Mammary epithelial cell (primary cell): ENCODE measurements at regions of chr19 and their contacts with region 1.

Region 1: GRCh38 chr19:6038634-6039405 is 60.9 kb upstream of the RANBP3 start:
- DNase-seq: no peak
- H3K4me3 ChIP-seq: no peak overlapping the region
- H3K27ac ChIP-seq: no peak overlapping the region
- H3K4me1 ChIP-seq: no peaks in the 10 kb centered on the region
- H3K27me3 ChIP-seq: no peaks in the 10 kb centered on the region
- CTCF ChIP-seq: no peak

Region 2: DNA sequence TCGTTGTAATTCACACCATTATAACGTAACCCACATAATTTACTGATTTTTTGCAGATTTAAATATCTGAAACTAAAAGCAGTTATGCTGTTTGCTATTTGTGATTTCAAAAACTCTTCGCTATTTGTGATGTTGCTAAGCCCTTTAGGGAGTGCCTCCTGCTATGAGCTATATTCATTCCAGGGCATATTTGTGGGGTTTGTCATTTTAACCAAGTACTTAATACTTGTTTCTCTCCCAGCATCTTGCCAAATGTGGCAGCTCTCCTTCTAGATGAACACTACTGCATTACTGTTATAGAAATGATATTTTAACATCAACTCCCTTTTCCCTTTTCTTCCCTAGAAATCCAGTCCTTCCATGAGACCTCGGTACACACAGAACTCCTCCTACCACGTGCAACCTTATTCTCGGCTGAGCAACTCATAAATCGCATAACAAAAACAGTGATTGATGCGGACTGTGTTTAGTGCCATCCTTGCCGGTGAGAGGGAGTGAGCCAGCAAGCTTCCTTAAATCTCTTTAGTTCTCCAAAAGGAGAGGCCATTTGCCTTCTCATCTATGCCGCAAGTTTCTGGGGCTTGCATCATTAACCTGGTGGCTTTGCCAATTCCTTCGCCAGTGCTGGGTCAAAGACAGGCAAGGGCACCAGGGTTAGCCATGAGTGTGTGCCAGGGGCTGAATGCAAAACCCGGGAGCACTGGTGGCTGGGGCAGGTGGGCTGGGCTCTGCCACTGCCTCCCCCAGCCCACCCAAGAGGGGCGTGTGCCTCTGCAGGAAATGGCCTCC is 38.0 kb after region 1 on chr19:
- CTCF ChIA-PET with region 1: no interaction called
- dilution Hi-C with region 1: loop called (anchors 5 kb)
- in situ Hi-C with region 1: no loop called
- intact Hi-C with region 1: no loop called
- DNase-seq: peak; percentile 76
- H3K4me3 ChIP-seq: no peak overlapping the region
- H3K27ac ChIP-seq: peak overlapping the region; percentile 94
- H3K4me1 ChIP-seq: peaks cover 14% of the 10 kb centered on the region
- H3K27me3 ChIP-seq: no peaks in the 10 kb centered on the region
- CTCF ChIP-seq: no peak

Region 3: DNA sequence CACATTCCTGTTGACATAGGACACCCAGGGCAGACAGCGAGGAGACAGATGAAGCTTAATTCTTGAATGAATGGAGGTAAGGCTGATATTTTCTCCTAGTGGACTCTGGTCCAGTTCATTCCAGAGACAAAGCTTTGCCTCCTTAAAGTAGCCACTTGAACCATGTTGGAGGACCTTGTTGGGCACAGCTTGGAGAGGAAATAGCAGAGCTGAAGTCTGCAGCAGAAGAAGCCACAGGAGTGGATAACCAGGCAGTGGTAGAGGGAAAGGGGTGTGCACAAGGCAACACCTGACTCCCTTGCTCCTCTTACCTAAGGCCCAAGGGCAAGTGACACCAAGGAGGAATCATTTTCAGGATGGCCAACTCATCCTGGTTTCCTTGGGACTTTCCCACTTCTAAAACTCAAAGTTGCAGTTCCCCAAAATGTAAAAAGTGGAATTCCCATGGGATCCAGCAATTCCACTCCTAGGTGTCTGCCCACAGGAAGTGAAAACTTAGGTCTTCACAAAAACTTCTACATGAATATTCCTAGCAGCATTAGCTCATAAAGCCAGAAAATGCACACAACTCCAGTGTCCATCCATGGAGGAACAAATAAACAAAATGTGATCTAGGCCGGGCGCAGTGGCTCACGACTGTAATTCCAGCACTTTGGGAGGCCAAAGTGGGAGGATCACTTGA is 78.1 kb after region 1 on chr19:
- CTCF ChIA-PET with region 1: no interaction called
- dilution Hi-C with region 1: loop called (anchors 5 kb)
- in situ Hi-C with region 1: no loop called
- intact Hi-C with region 1: no loop called
- DNase-seq: no peak
- H3K4me3 ChIP-seq: no peak overlapping the region
- H3K27ac ChIP-seq: no peak overlapping the region
- H3K4me1 ChIP-seq: no peaks in the 10 kb centered on the region
- H3K27me3 ChIP-seq: no peaks in the 10 kb centered on the region
- CTCF ChIP-seq: no peak

Region 4: GRCh38 chr19:6354098-6354674 is 315.4 kb after region 1 on chr19:
- CTCF ChIA-PET with region 1: no interaction called
- dilution Hi-C with region 1: no loop called
- in situ Hi-C with region 1: no loop called
- intact Hi-C with region 1: no loop called
- DNase-seq: no peak
- H3K4me3 ChIP-seq: no peak overlapping the region
- H3K27ac ChIP-seq: no peak overlapping the region
- H3K4me1 ChIP-seq: peaks cover 7% of the 10 kb centered on the region
- H3K27me3 ChIP-seq: no peaks in the 10 kb centered on the region
- CTCF ChIP-seq: peak; percentile 28 to 53

Region 5: DNA sequence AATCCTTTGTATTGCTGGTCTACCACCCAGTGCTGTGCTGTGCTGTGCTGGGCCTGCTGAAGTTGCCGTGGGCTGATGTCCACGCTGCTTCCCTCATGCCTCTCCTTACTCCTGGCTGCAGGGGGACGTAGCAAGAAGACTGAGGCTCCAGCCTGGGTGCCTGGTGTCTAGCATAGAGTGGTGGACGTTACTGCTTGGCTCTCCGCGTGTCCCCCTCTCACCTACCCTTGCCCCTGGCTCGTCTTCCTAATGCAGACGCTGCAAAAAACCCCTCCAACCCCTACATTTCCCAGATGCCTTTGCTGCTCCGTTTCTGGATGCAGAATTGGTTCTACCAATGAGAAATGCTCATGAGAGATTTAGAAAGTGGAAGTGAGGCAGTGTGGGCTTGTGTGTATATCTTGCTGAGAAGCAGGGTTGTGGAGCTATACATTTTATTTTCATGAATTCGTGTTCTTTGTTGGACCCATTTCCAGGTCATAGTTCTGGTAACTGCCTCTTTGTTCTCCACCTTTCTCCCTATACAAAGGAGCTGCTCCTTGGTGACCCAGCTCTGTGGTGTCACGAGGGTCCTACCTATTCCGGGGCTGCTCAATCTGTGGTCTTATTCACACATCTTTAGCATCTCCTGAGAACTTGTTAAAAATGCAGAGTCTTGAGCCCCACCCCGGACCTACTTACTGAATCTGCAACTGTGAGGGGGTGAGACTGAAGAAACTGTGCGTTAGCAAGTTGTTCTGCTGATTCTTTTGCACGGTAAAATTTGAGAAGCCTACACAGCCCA is 450.6 kb after region 1 on chr19:
- CTCF ChIA-PET with region 1: no interaction called
- dilution Hi-C with region 1: loop called (anchors 10 kb)
- in situ Hi-C with region 1: no loop called
- intact Hi-C with region 1: no loop called
- DNase-seq: no peak
- H3K4me3 ChIP-seq: no peak overlapping the region
- H3K27ac ChIP-seq: no peak overlapping the region
- H3K4me1 ChIP-seq: no peaks in the 10 kb centered on the region
- H3K27me3 ChIP-seq: no peaks in the 10 kb centered on the region
- CTCF ChIP-seq: no peak